ENCODE measurements at regions of chr1 and their contacts with region 1.

Region 1: DNA sequence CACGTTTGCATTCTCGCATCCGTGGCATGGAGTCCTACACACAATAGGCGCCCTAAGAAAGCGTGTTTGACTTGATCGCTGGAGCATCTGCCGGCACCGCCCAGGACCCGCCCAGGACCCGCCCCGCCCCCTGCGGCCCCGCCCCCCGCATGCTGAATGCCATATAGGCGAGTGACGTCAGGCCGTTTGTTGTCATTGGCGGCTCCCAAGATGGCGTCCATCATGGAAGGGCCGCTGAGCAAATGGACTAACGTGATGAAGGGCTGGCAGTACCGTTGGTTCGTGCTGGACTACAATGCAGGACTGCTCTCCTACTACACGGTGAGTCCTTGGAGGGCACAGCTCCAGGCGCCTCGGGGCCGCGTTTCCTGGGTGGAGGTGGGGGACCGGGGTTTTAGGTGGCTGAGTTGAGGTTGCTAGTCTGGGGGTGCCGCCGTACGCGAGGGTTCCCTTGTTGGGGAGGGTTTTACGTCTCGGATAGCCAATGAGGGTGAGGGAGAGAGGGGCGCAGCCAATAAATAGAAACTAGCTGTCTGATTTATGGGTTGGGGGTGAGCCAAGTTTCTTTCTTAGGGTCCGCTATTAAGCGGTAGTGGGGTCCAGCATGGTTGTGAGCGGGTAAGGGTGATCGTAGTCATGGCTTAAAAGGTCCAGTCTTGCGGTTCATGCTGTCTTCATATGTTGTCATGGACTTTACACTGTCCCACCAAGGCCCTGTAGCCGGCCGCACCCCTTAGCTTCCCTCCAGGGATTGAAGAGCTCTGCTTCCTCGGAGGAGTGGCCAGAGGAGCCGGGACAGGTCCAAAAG is at the start of gene OSBPL9:
- DNase-seq: peak; percentile 90 to 94 (median 92)
- ATAC-seq: peak; percentile 89 to 96 (median 95)
- H3K4me3 ChIP-seq: peak within 1 kb of the TSS; percentile 55 to 95 (median 84)
- H3K27ac ChIP-seq: peak within 1 kb of the TSS; percentile 51 to 93 (median 87)
- H3K4me1 ChIP-seq: peaks cover 8 to 60% (median 44%) of the 10 kb centered on the region in 12 donors
- H3K27me3 ChIP-seq: no peaks in the 10 kb centered on the region
- CTCF ChIP-seq: no peak
- POLR2A ChIP-seq: peak in 1 of 2 donors; percentile 75
- total RNA-seq, gene OSBPL9: 44.5 to 69.5 (median 53.5) TPM

Region 2: GRCh38 chr1:51410568-51411460 is 206.3 kb before region 1 on chr1:
- intact Hi-C with region 1: loop called in 1 of 10 experiments (anchors 10 kb)
- DNase-seq: no peak
- ATAC-seq: peak in 2 of 4 donors; percentile 36 to 57
- H3K4me3 ChIP-seq: no peak overlapping the region
- H3K27ac ChIP-seq: peak overlapping the region in 10 of 12 donors; percentile 5 to 58 (median 26)
- H3K4me1 ChIP-seq: peaks cover 0 to 28% (median 5%) of the 10 kb centered on the region in 12 donors
- H3K27me3 ChIP-seq: no peaks in the 10 kb centered on the region
- CTCF ChIP-seq: no peak
- POLR2A ChIP-seq: no peak

Region 3: DNA sequence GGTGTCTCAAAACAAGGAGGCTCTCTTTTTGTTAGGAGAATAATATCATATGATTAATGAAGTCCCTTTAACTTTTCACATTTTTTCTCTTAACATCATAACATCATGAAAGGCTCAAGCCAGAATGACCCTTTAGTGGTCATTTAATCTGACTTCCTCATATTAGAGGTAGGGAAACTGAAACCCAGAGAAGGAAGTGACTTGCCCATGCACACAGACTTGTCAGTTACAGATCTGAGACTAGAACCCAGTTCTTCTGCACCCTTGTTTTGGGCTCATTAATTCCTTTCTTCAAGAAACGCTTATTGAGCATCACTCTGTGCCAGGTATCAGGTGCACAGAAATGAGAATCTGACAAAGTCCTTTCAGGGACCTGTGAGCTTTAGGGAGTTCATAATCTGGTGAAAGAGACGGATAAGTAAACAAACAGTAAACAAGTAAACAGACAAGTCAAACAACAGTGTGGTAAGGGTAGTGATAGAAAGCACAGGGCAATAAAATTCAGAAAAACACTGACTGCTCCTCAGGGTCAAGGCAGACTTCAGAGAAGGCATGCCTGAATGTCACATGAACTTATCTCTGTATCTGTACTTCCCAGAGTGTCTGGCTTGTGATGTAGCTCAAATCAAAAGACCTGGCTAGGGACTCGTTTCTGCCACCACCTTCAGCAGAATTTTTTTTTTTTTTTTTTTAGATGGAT is 38.6 kb before region 1 on chr1:
- intact Hi-C with region 1: loop called in 1 of 10 experiments (anchors 5 kb)
- DNase-seq: no peak
- ATAC-seq: peak in 1 of 4 donors; percentile 48
- H3K4me3 ChIP-seq: no peak overlapping the region
- H3K27ac ChIP-seq: peak overlapping the region in 1 of 12 donors; percentile 68
- H3K4me1 ChIP-seq: peaks cover 0 to 28% (median 2%) of the 10 kb centered on the region in 12 donors
- H3K27me3 ChIP-seq: no peaks in the 10 kb centered on the region
- CTCF ChIP-seq: no peak
- POLR2A ChIP-seq: no peak

Region 4: DNA sequence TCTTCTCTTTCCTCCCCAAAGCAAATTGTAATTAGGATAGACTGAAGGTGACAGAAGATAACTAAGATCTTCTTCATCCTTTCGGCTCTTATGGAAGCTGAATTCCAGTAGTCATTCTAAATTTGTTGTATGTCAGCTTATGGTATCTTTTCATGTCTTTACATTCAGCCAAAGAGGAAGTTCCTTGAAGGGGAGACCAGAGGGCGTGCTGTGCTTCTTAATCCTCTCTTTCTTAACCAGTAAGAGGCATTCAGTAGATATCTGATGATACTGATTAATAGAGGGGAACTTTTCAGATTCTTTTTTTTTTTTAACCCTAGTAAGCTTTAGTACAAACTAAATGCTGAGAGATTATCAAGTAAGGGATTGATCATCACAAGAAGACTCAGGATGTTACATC is 102.0 kb after region 1 on chr1:
- intact Hi-C with region 1: no loop called
- DNase-seq: no peak
- ATAC-seq: no peak
- H3K4me3 ChIP-seq: no peak overlapping the region
- H3K27ac ChIP-seq: no peak overlapping the region
- H3K4me1 ChIP-seq: no peaks in the 10 kb centered on the region
- H3K27me3 ChIP-seq: no peaks in the 10 kb centered on the region
- CTCF ChIP-seq: no peak
- POLR2A ChIP-seq: no peak

Region 5: DNA sequence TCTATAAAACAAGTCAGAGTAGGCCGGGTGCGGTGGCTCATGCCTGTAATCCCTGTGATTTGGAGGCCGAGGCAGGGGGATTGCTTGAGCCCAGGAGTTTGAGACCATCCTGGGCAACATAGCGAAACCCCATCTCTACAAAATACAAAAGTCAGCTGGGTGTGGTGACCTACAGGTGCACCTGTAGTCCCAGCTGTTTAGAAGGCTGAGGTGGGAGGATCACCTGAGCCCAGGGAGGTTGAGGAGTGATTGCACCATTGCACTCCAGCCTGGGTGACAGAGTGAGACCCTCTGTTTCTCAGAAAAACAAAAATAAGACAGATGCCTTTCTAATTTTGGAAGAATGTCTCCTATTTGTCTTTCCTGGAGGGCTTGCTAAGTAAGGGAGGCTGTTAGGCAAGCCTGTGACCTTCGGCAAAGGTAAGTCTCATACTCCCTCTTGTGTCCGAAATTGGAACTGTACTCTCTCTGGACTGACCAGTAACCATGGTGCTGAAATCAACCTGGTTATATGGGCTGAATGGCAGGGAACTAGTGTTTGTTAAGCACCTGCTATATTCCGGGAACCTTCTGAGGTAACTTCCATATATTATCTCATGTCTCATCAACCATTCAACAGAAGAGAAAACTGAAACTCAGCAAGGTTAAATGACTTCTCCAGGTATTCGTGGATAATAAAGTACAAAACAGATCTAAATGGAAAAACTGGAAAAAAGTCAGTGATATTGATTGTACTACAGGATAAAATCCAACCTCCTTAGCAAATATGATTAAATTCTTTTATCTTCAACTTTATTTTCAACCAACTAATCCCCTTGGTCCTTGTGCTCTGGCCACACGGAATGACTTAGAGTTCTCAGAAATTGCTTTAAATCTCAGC is 385.2 kb after region 1 on chr1:
- intact Hi-C with region 1: no loop called
- DNase-seq: peak in 2 of 5 donors; percentile 50 to 58
- ATAC-seq: peak; percentile 69 to 94 (median 88)
- H3K4me3 ChIP-seq: no peak overlapping the region
- H3K27ac ChIP-seq: no peak overlapping the region
- H3K4me1 ChIP-seq: no peaks in the 10 kb centered on the region
- H3K27me3 ChIP-seq: peaks cover 0 to 35% (median 5%) of the 10 kb centered on the region in 9 donors
- CTCF ChIP-seq: peak; percentile 69 to 92 (median 87)
- POLR2A ChIP-seq: no peak